Adrenal gland (tissue), 19 donors: ENCODE measurements at regions of chr20 and their contacts with region 1.

Region 1: DNA sequence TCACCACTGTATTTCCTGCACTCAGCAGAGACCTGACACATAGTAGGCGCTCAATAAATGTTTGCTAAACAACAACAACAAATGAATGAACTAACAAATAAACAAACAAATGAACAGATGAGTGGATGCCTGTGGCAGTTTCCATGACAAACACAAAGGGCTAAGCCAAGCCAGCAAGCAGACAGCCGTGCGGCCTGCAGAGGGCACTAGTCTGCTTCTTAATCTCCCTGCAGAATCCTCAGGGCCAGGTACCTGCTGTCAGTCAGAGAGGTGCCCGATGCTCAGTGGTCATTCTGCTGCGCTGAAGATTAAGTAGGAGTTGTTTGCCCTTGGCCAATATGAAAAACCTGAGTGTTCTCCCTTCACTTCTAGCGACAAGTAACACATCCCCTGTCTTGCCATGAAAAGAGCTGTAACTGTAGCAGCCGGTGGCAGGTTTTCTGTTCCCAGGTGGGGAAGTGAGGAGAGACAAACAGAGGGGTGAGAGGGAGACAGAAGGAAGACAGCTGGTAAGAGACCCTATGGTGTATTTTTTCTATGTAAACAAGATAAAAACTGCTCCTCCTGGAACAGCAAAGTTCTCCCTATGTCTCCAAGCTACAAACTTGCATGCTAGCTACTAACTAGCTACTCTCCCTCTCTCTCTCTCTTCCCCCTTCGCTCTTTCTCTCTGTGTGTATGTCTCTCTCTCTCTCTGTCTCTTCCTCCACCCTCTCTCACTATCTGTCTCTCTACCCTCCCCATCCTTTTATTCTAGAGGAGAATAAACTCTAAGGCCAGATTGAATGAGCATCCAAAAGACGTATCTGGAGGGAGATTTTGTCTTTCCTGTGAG is at the start of gene MC3R:
- DNase-seq: peak; percentile 56 to 84 (median 70)
- H3K4me3 ChIP-seq: no peak within 1 kb of the TSS
- H3K27ac ChIP-seq: no peak within 1 kb of the TSS
- H3K4me1 ChIP-seq: no peaks in the 10 kb centered on the region
- H3K27me3 ChIP-seq: peaks cover 17% of the 10 kb centered on the region
- CTCF ChIP-seq: peak; percentile 59 to 81 (median 70)
- POLR2A ChIP-seq: no peak
- total RNA-seq, gene MC3R: not detected

Region 2: GRCh38 chr20:55649254-55649653 is 598.9 kb before region 1 on chr20:
- intact Hi-C with region 1: no loop called
- DNase-seq: no peak
- H3K4me3 ChIP-seq: no peak overlapping the region
- H3K27ac ChIP-seq: no peak overlapping the region
- H3K4me1 ChIP-seq: no peaks in the 10 kb centered on the region
- H3K27me3 ChIP-seq: no peaks in the 10 kb centered on the region
- CTCF ChIP-seq: no peak
- POLR2A ChIP-seq: no peak

Region 3: GRCh38 chr20:56328853-56329252 is 80.7 kb after region 1 on chr20:
- intact Hi-C with region 1: loop called in 1 of 2 experiments (anchors 5 kb)
- DNase-seq: peak in 6 of 7 donors; percentile 16 to 44 (median 29)
- H3K4me3 ChIP-seq: no peak overlapping the region
- H3K27ac ChIP-seq: no peak overlapping the region
- H3K4me1 ChIP-seq: no peaks in the 10 kb centered on the region
- H3K27me3 ChIP-seq: peaks cover 4% of the 10 kb centered on the region
- CTCF ChIP-seq: no peak
- POLR2A ChIP-seq: no peak

Region 4: DNA sequence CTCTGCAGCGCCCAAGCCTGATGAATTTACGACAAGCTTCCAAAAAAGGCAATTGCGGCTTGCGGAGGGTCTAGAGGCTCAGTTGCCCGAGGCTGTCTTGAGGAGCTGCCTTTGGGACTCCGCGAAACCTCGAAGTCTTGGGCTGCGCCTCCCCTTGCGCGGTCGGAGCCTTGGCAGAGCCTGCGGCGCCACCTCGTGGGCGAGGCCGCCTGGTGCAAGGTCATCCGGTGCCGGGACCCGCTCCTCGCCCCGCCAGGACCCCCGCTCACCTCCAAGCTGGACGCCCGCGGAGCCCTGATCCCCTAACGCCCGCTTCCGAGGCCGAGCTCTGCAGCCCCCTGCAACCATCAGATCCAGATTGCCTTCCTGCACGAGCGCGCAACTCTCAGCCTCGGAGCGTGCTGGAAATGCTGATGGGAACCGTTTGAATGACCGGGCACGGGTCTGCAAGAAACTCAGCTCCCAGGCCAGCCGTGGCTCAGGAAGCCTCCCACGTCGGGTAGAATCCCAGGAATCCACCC is 95.8 kb after region 1 on chr20:
- intact Hi-C with region 1: loop called in 1 of 2 experiments (anchors 2 kb)
- DNase-seq: peak in 6 of 7 donors; percentile 44 to 68 (median 64)
- H3K4me3 ChIP-seq: peak overlapping the region in 1 of 4 donors; percentile 21
- H3K27ac ChIP-seq: no peak overlapping the region
- H3K4me1 ChIP-seq: peaks cover 0 to 14% of the 10 kb centered on the region in 2 donors
- H3K27me3 ChIP-seq: no peaks in the 10 kb centered on the region
- CTCF ChIP-seq: peak; percentile 60 to 84 (median 78)
- POLR2A ChIP-seq: no peak

Region 5: DNA sequence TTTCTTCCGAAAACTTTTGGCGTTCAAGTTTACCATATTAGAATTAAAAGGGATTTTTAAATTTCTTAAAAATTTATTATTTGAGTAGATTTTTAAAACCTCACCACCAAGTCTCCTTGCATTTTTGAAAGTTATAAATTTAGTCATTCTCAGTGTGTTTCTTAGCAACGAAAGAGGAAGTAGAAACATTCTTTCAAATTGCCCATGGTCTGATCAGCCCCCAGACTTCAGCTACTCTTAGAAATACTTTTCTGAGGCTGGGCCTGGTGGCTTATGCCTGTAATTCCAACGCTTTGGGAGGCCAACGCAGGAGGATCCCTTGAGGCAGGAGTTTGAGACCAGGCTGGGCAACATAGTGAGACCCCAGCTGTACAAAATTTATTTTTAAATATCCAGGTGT is 205.2 kb after region 1 on chr20:
- intact Hi-C with region 1: no loop called
- DNase-seq: no peak
- H3K4me3 ChIP-seq: no peak overlapping the region
- H3K27ac ChIP-seq: no peak overlapping the region
- H3K4me1 ChIP-seq: no peaks in the 10 kb centered on the region
- H3K27me3 ChIP-seq: no peaks in the 10 kb centered on the region
- CTCF ChIP-seq: no peak
- POLR2A ChIP-seq: no peak